Thyroid gland (tissue), 4 donors: ENCODE measurements at regions of chr9 and their contacts with region 1.

Region 1: DNA sequence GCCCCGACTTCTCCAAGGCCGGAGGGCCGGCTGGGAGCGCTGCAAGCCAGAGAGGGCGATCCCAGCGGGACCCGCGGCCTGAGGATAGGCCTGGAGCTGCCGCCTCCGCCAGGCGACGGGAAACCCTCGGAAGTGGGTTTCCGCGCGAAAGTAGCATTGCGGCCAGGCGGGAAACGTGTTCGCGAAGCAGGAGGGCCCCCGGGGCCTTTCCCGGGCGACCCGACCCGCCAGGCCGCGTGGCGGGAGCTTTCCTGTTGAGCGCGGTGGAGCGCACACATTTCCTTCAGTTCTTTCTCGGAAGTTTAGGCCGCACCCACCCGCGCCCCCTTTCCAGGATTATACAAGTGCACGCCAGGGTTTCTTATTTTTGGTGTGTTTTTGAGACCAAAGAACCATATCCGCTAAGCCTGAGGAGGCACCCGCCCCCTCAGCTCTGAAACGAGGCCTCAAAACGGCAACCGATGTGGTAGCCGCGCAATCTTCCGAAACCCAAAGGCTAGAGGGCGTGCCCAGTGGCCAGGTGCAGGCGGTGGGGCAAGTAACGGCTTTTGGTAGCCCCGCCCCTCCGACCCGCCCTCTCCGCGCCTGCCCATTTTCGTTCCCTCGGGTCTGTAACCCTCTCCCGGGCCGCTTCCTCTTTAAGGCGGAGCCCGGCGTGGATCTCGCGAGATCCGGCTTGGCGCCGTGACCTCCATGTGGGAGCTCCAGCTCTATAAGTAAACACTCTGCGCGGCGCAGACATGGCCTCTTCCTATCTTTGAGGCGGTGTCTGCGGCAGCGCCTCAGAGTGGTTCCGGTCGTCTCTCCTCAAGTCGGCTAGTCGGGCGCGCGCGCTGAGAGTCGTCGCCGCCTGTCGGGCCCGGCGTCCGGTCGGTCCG is at the start of gene UHRF2:
- DNase-seq: peak; percentile 99
- H3K4me3 ChIP-seq: peak within 1 kb of the TSS; percentile 67 to 84 (median 82)
- H3K27ac ChIP-seq: peak within 1 kb of the TSS; percentile 71 to 87 (median 80)
- H3K4me1 ChIP-seq: peaks cover 14 to 23% of the 10 kb centered on the region in 2 donors
- H3K27me3 ChIP-seq: no peaks in the 10 kb centered on the region
- CTCF ChIP-seq: no peak
- POLR2A ChIP-seq: peak in 1 of 2 donors; percentile 91
- total RNA-seq, gene UHRF2: 44.4 to 103 (median 74.8) TPM

Region 2: GRCh38 chr9:6268830-6269397 is 143.8 kb before region 1 on chr9:
- intact Hi-C with region 1: no loop called
- DNase-seq: no peak
- H3K4me3 ChIP-seq: no peak overlapping the region
- H3K27ac ChIP-seq: no peak overlapping the region
- H3K4me1 ChIP-seq: no peaks in the 10 kb centered on the region
- H3K27me3 ChIP-seq: no peaks in the 10 kb centered on the region
- CTCF ChIP-seq: no peak
- POLR2A ChIP-seq: no peak

Region 3: DNA sequence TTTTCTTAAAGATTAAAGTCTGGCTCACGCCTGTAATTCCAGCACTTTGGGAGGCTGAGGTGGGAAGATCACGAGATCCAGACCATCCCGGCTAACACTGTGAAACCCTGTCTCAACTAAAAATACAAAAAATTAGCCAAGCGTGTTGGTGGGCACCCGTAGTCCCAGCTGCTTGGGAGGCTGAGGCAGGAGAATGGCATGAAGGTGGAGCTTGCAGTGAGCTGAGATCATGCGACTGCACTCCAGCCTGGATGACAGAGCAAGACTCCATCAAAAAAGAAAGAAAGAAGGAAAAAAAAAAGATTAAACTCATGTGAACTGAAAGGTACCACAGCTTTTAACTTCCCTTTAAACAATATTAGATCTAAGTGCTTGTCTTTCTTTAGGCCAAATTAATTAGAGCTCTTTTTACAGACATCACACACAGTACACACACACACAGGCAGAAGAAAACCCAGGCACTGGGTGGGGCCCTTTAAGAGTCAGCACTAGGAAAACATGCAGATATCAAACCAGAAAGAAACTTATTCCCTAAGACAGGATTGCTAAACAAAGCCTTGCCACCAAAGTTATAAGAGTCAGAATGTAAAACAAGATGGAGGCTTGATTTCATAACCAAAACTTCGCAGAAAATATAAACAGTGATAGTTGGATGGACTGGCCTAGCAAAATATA is 29.0 kb before region 1 on chr9:
- intact Hi-C with region 1: no loop called
- DNase-seq: no peak
- H3K4me3 ChIP-seq: no peak overlapping the region
- H3K27ac ChIP-seq: no peak overlapping the region
- H3K4me1 ChIP-seq: no peaks in the 10 kb centered on the region
- H3K27me3 ChIP-seq: no peaks in the 10 kb centered on the region
- CTCF ChIP-seq: no peak
- POLR2A ChIP-seq: no peak

Region 4: DNA sequence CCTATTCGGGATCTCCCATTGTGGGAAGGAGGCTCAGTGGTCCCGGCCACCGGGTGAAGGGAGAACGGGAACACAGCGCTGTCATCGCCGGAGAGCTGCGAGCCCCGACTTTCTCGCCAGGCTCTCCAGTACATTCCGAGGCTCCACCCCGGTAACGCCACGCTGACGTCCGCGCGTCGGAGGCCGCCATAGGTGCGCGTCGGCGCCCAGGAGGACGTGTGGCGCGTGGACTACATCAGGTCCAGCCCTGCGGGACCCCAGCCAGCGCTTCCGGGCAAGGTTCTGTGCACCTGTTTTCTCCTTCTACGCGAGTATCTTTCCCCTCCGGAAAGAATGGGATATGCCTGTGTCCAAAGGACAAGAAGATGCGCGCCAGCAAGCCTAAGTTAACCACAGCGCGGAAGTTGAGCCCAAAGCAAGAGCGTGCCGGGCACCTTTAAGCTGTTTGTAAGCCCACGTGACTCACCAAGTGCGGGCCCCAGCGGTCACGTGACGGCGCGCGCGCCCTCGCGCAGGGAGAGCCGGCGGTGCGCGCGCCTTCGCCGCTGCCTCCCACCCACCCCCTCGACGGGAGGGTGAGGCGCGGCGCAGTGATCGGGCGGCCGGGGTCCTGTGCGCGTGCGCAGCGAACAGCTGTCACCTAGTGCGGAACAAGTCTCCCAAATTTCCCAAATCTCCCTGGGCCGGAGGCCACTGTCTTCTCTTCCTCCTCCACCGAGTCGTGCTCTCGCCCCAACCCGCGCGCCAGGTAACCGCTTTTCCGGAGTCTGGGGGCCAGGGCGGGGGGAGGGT is 344.9 kb after region 1 on chr9 and contains the start of gene KDM4C:
- intact Hi-C with region 1: loop called (anchors 5 kb)
- DNase-seq: peak; percentile 97
- H3K4me3 ChIP-seq: peak within 1 kb of the TSS; percentile 90 to 98 (median 96)
- H3K27ac ChIP-seq: peak within 1 kb of the TSS; percentile 93 to 99 (median 98)
- H3K4me1 ChIP-seq: peaks cover 7 to 16% of the 10 kb centered on the region in 2 donors
- H3K27me3 ChIP-seq: no peaks in the 10 kb centered on the region
- CTCF ChIP-seq: no peak
- POLR2A ChIP-seq: peak; percentile 83 to 97
- total RNA-seq, gene KDM4C: 52.1 to 83.6 (median 65.5) TPM